ENCODE measurements at regions of chr11 and their contacts with region 1.

Region 1: GRCh38 chr11:96342961-96343711 is at the start of gene MAML2:
- DNase-seq: peak; percentile 96 to 97
- H3K4me3 ChIP-seq: peak within 1 kb of the TSS; percentile 66
- H3K4me3 Mint-ChIP-seq: peak within 1 kb of the TSS; percentile 93
- H3K27ac Mint-ChIP-seq: peak within 1 kb of the TSS; percentile 68
- H3K4me1 ChIP-seq: peaks cover 19% of the 10 kb centered on the region
- H3K4me1 Mint-ChIP-seq: peaks cover 24% of the 10 kb centered on the region
- H3K27me3 ChIP-seq: no peaks in the 10 kb centered on the region
- H3K27me3 Mint-ChIP-seq: no peaks in the 10 kb centered on the region
- CTCF ChIP-seq: peak; percentile 99
- total RNA-seq, gene MAML2: 11.5 and 12.2 TPM in 2 replicates

Region 2: GRCh38 chr11:95003716-95004115 is 1339.4 kb before region 1 on chr11:
- CTCF ChIA-PET with region 1: no interaction called
- POLR2A ChIA-PET with region 1: no interaction called
- intact Hi-C with region 1: no loop called
- DNase-seq: no peak
- H3K4me3 ChIP-seq: no peak overlapping the region
- H3K4me3 Mint-ChIP-seq: no peak overlapping the region
- H3K27ac Mint-ChIP-seq: no peak overlapping the region
- H3K4me1 ChIP-seq: no peaks in the 10 kb centered on the region
- H3K4me1 Mint-ChIP-seq: no peaks in the 10 kb centered on the region
- H3K27me3 ChIP-seq: no peaks in the 10 kb centered on the region
- H3K27me3 Mint-ChIP-seq: peaks cover 23% of the 10 kb centered on the region
- CTCF ChIP-seq: no peak

Region 3: DNA sequence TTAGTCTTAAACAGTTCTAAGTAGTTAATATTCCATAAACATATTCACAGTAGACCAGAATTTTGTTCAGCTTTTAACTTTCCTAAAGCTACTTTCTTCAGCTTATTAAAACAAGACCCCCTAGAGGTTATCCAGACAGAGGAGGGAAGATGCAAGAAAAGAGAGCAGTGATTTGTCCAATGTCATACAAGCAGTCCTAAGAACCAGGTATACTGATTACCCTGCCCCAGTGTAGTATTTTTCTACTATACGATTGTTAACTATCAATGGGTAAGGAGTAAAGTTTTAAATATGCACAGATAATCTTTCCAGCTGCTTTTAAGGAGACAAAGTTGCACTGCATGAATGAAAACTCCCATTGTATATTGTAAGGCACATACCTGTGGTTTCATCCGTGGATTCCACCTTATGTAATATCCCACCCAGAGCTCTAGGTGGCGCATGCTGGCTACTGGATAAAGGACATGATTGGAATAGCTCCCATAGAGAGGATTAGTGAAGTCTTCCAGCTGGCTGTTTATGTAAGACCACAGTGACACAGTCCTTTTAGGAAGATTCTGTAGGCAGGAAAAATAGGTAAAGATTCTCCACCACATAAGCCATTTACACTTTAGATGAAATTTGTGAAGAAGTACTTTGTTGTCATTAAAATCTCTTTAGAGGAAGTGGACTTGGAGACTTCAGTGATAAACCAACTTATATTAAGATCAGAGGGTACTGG is 507.2 kb before region 1 on chr11:
- CTCF ChIA-PET with region 1: interaction called, 47 read pairs
- POLR2A ChIA-PET with region 1: no interaction called
- intact Hi-C with region 1: loop called (anchors 2 kb)
- DNase-seq: peak; percentile 84 to 85
- H3K4me3 ChIP-seq: no peak overlapping the region
- H3K4me3 Mint-ChIP-seq: no peak overlapping the region
- H3K27ac Mint-ChIP-seq: no peak overlapping the region
- H3K4me1 ChIP-seq: no peaks in the 10 kb centered on the region; the same call in 1 of the 2 replicates
- H3K4me1 Mint-ChIP-seq: peaks cover 6% of the 10 kb centered on the region
- H3K27me3 ChIP-seq: no peaks in the 10 kb centered on the region
- H3K27me3 Mint-ChIP-seq: no peaks in the 10 kb centered on the region
- CTCF ChIP-seq: peak; percentile 97 to 98

Region 4: DNA sequence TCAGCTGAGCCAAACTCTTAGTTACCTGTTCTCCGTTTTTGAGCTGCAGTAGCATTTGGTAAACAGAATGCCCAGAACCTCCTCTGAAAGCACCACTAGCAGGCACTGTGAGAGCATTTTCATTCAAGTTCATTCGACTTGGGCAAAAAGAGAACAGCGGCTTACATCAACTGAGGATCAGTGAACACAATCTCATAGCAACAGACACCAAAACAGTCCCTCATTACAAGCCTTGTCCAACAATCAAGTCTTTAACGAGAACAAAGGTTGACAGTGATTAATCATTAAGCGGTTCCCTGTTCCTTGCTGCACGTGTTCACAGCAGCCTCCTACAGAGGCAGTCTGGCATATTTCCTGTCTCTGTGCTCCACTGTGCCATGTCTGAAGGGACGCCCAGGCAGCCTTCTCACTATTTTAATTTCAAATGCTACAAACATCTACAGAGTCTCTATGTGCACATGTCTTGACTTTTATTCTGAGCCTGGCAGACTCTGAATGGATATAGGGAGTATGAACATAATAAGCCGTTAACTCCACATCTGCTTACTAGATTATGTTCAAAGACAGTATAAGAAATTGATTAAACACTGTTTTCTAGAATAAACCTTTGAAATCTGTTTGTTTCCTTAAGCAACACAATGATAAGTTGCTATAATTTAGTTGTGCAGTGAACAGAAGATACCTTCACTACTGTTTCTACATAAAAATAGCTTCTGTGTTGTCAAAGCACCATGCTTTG is 330.9 kb before region 1 on chr11:
- CTCF ChIA-PET with region 1: interaction called, 7 read pairs
- POLR2A ChIA-PET with region 1: interaction called, 3 read pairs
- intact Hi-C with region 1: loop called (anchors 2 kb)
- DNase-seq: peak; percentile 62 to 69
- H3K4me3 ChIP-seq: no peak overlapping the region
- H3K4me3 Mint-ChIP-seq: no peak overlapping the region
- H3K27ac Mint-ChIP-seq: no peak overlapping the region
- H3K4me1 ChIP-seq: peaks cover 32% of the 10 kb centered on the region
- H3K4me1 Mint-ChIP-seq: peaks cover 14% of the 10 kb centered on the region
- H3K27me3 ChIP-seq: no peaks in the 10 kb centered on the region
- H3K27me3 Mint-ChIP-seq: no peaks in the 10 kb centered on the region
- CTCF ChIP-seq: peak; percentile 38 to 70

Region 5: GRCh38 chr11:96149743-96150555 is 193.2 kb before region 1 on chr11:
- CTCF ChIA-PET with region 1: interaction called, 5 read pairs
- POLR2A ChIA-PET with region 1: no interaction called
- intact Hi-C with region 1: loop called (anchors 1 kb)
- DNase-seq: no peak
- H3K4me3 ChIP-seq: no peak overlapping the region
- H3K4me3 Mint-ChIP-seq: no peak overlapping the region
- H3K27ac Mint-ChIP-seq: no peak overlapping the region
- H3K4me1 ChIP-seq: peaks cover 59% of the 10 kb centered on the region
- H3K4me1 Mint-ChIP-seq: peaks cover 35% of the 10 kb centered on the region
- H3K27me3 ChIP-seq: no peaks in the 10 kb centered on the region
- H3K27me3 Mint-ChIP-seq: no peaks in the 10 kb centered on the region
- CTCF ChIP-seq: no peak

Region 6: GRCh38 chr11:96227244-96227643 is 115.9 kb before region 1 on chr11:
- CTCF ChIA-PET with region 1: interaction called, 15 read pairs
- POLR2A ChIA-PET with region 1: interaction called, 3 read pairs
- intact Hi-C with region 1: no loop called
- DNase-seq: no peak
- H3K4me3 ChIP-seq: no peak overlapping the region
- H3K4me3 Mint-ChIP-seq: no peak overlapping the region
- H3K27ac Mint-ChIP-seq: no peak overlapping the region
- H3K4me1 ChIP-seq: peaks cover 4% of the 10 kb centered on the region
- H3K4me1 Mint-ChIP-seq: peaks cover 10% of the 10 kb centered on the region
- H3K27me3 ChIP-seq: no peaks in the 10 kb centered on the region
- H3K27me3 Mint-ChIP-seq: no peaks in the 10 kb centered on the region
- CTCF ChIP-seq: no peak

Region 7: GRCh38 chr11:96279018-96279895 is 63.9 kb before region 1 on chr11:
- CTCF ChIA-PET with region 1: interaction called, 11 read pairs
- POLR2A ChIA-PET with region 1: no interaction called
- intact Hi-C with region 1: no loop called
- DNase-seq: no peak
- H3K4me3 ChIP-seq: no peak overlapping the region
- H3K4me3 Mint-ChIP-seq: no peak overlapping the region
- H3K27ac Mint-ChIP-seq: no peak overlapping the region
- H3K4me1 ChIP-seq: peaks cover 41% of the 10 kb centered on the region
- H3K4me1 Mint-ChIP-seq: peaks cover 37% of the 10 kb centered on the region
- H3K27me3 ChIP-seq: no peaks in the 10 kb centered on the region
- H3K27me3 Mint-ChIP-seq: no peaks in the 10 kb centered on the region
- CTCF ChIP-seq: no peak

Region 8: GRCh38 chr11:96389720-96390487 is 46.8 kb after region 1 on chr11 and contains the starts of genes CCDC82 and JRKL:
- CTCF ChIA-PET with region 1: interaction called, 31 read pairs
- POLR2A ChIA-PET with region 1: interaction called, 13 read pairs
- intact Hi-C with region 1: loop called (anchors 1 kb)
- DNase-seq: peak; percentile 99 to 100
- H3K4me3 ChIP-seq: peak within 1 kb of the TSS; percentile 82
- H3K4me3 Mint-ChIP-seq: peak within 1 kb of the TSS; percentile 82
- H3K27ac Mint-ChIP-seq: peak within 1 kb of the TSS; percentile 88
- H3K4me1 ChIP-seq: peaks cover 28% of the 10 kb centered on the region
- H3K4me1 Mint-ChIP-seq: peaks cover 19% of the 10 kb centered on the region
- H3K27me3 ChIP-seq: no peaks in the 10 kb centered on the region
- H3K27me3 Mint-ChIP-seq: no peaks in the 10 kb centered on the region
- CTCF ChIP-seq: no peak
- total RNA-seq, gene CCDC82: 38.2 TPM in 2 replicates
- total RNA-seq, gene JRKL: 16.6 and 17.4 TPM in 2 replicates